ENCODE measurements at regions of chr13 and their contacts with region 1.

Region 1: DNA sequence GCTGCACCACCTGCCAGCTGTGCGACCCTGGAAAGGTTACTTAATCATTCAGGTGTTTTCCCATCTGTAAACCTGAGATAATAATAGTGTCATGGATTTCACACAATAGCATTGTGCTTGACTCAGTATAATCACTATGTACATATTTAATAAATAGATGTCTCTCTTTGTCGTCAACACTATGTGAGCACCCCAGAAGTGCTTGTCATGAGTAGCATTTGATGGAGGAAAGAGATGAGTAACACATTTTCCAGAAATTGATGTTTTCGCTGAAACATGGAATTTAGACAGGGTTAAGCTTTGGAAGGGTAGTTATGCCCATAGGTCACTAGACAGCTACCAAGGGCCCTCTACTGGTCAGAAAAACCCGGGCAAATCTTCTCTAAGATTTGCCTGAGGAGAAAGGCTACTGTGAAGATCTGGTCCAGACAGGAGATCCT is 9.5 kb upstream of the MBNL2 start:
- DNase-seq: peak; percentile 68
- ATAC-seq: peak; percentile 89
- H3K4me3 ChIP-seq: no peak overlapping the region
- H3K27ac ChIP-seq: no peak overlapping the region
- H3K4me1 ChIP-seq: 0 out of 2 replicates have a peak, but pooled peaks cover 10% of the 10 kb centered on the region
- H3K27me3 ChIP-seq: no peaks in the 10 kb centered on the region
- CTCF ChIP-seq: peak; percentile 82

Region 2: DNA sequence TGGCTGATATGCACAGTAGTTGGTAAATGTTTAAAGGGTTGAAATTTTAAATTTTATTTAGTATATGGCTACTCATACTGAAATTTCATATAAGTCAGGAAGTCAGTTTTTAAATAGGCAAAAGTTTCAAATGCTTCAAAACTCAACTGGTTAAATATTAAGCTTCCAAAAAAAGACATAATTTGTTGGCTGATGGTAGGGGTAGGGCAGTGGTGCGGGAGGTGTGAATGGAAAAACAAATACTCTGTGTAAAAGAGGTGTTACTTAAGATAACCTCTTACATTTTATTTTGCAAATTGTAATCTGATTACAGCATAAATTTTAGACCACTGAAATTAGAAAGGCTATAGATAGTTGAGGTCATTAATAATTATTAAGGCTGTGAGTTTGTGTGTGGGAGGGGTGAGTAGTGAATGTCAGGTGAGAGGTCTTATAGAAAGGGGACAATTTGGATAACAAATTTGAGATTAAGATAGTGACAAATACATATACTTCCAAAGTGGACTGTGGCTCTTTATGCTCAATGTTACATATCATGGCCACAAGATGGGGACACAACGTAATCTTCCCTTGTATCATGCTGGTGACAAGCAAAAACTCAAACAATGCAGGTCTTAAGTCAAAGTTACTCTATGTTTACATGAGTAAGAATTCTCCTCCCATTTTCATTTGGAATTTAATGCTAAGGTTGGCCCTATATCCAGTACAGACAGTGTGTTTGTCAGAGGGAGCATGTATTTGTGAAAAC is 181.7 kb before region 1 on chr13:
- CTCF ChIA-PET with region 1: no interaction called
- POLR2A ChIA-PET with region 1: no interaction called
- intact Hi-C with region 1: loop called (anchors 2 kb)
- DNase-seq: peak; percentile 60
- ATAC-seq: peak; percentile 68
- H3K4me3 ChIP-seq: no peak overlapping the region
- H3K27ac ChIP-seq: no peak overlapping the region
- H3K4me1 ChIP-seq: no peaks in the 10 kb centered on the region; the same call in 1 of the 2 replicates
- H3K27me3 ChIP-seq: no peaks in the 10 kb centered on the region
- CTCF ChIP-seq: peak; percentile 58

Region 3: GRCh38 chr13:97091196-97091595 is 121.4 kb before region 1 on chr13:
- CTCF ChIA-PET with region 1: no interaction called
- POLR2A ChIA-PET with region 1: no interaction called
- intact Hi-C with region 1: no loop called
- DNase-seq: no peak
- ATAC-seq: no peak
- H3K4me3 ChIP-seq: no peak overlapping the region
- H3K27ac ChIP-seq: no peak overlapping the region
- H3K4me1 ChIP-seq: no peaks in the 10 kb centered on the region
- H3K27me3 ChIP-seq: no peaks in the 10 kb centered on the region
- CTCF ChIP-seq: no peak

Region 4: DNA sequence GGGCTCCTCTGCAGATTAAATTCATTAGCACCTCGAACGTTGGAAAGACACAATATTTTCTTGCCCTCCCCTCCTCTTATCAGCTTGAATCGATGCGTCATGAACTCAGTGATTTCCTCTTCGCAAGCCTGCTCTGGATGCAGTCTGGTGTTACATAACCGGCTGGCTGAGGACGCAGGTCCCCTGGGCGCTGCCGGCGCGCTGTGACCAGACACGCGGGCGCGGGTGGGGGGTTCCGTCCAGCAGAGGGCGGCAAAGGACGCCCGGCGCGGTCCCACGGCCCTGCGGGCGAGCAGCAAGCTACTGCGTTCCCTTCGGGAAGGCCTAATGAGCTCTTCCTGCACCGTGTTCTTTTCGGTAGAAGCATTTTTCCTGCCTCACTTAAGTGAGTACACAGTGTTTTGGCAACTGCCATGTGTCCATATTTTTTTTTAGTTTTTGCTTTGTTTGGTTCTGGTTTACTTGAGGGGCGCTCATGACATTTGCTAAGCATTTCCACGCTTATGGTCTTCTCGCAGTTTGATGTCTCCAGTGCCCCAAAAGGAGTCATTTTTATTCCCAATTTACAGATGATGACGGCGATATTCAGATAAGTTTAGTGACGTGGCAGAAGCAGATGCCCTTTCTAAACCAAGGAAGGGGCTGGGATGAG is 102.7 kb before region 1 on chr13:
- CTCF ChIA-PET with region 1: interaction called, 17 read pairs
- POLR2A ChIA-PET with region 1: interaction called, 5 read pairs
- intact Hi-C with region 1: loop called (anchors 1 kb)
- DNase-seq: peak; percentile 82
- ATAC-seq: peak; percentile 94
- H3K4me3 ChIP-seq: no peak overlapping the region
- H3K27ac ChIP-seq: no peak overlapping the region
- H3K4me1 ChIP-seq: peaks cover 12% of the 10 kb centered on the region
- H3K27me3 ChIP-seq: no peaks in the 10 kb centered on the region
- CTCF ChIP-seq: peak; percentile 88

Region 5: GRCh38 chr13:97460004-97460775 is 247.6 kb after region 1 on chr13:
- CTCF ChIA-PET with region 1: no interaction called
- POLR2A ChIA-PET with region 1: no interaction called
- intact Hi-C with region 1: no loop called
- DNase-seq: no peak
- ATAC-seq: no peak
- H3K4me3 ChIP-seq: no peak overlapping the region
- H3K27ac ChIP-seq: no peak overlapping the region
- H3K4me1 ChIP-seq: no peaks in the 10 kb centered on the region
- H3K27me3 ChIP-seq: no peaks in the 10 kb centered on the region
- CTCF ChIP-seq: no peak

Region 6: DNA sequence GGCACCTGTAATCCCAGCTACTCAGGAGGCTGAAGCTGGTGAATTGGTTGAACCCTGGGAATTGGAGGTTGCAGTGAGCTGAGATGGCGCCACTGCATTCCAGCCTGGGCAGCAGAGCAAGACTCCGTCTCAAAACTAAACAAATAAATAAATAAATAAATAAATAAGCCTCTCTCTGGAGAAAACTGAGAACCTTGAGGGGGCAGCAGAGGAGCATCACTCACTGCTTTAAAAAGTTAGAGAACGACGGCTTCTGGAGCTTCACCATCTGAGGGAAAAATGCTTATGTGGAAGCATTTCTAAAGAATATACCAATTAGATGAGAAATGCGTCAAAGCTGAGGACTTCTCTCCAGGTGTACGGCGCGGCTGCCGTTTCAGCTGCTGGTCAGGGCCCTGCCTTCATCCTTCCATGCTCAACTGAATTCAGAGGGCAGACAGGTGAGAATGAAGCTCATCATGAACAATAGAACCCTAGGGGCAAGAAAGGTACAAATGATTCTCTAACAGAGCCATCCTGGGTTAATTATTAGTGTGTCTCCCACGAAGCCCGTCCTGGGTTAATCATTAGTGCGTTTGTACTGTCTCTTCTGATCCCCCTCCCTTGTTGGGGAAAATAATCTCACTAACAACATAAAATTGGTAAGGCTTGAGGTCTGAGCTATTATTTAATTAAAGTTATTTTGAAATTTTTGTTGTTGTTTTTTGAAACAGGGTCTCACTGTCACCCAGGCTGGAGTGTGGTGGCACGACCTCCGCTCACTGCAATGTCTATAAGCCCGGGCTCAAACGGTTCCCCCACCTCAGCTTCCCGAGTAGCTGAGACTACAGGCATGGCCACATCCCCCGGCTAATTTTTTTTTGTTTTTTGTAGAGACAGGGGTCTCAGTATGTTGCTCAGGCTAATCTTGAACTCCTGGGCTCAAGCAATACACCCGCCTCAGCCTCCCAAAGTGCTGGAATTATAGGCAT is 820.9 kb after region 1 on chr13:
- CTCF ChIA-PET with region 1: no interaction called
- POLR2A ChIA-PET with region 1: no interaction called
- intact Hi-C with region 1: no loop called
- DNase-seq: peak; percentile 43
- ATAC-seq: peak; percentile 64
- H3K4me3 ChIP-seq: no peak overlapping the region
- H3K27ac ChIP-seq: no peak overlapping the region
- H3K4me1 ChIP-seq: no peaks in the 10 kb centered on the region
- H3K27me3 ChIP-seq: no peaks in the 10 kb centered on the region
- CTCF ChIP-seq: peak; percentile 30; the same call in 1 of the 2 replicates

Measured in PC-3 (cell line).